ENCODE measurements at regions of chr12 and their contacts with region 1.

Region 1: DNA sequence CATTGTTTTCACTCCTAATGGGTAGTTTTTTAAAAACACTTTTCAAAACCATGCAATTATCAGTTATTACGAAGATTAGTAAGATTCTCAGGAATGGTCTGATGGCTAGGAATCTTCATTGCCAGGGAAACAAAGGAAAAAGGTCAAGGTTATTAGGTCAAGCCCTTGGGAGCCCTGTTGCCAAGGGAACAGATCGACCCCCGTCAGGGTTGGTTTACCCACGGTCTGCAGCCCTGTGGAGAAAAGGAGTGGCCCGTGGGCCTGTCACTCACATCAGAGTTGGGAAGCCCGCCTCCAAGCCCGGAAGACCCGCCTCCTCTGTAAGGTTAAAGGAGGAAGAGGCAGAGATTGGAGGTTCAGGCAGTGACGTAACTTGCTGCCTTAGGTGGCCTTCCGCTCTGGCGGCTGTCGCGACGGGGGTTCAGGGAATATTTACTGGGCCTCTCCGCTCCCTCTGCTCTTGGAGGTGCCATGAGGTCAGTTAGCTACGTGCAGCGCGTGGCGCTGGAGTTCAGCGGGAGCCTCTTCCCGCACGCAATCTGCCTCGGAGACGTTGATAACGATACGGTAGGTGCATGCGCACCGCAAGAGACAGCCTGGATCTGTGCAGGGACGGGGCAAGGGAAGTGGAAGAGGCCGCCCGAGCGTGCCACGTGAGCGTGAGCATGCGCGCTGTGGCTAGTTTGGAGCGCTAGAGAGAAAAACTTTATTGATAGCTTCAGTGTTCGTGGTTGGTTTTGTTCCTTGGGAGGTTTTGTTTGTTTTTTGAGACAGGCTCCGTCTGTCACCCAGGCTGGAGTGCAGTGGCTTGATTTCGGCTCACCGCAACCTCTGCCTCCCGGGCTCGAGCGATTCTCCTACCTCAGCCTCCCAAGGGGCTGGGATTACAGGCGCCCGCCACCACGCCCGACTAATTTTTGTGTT is at the start of gene ITFG2:
- DNase-seq: peak; percentile 99
- H3K4me3 Mint-ChIP-seq: peak within 1 kb of the TSS; percentile 98
- H3K27ac Mint-ChIP-seq: peak within 1 kb of the TSS; percentile 95
- H3K4me1 Mint-ChIP-seq: peaks cover 29% of the 10 kb centered on the region
- H3K27me3 Mint-ChIP-seq: peaks cover 4% of the 10 kb centered on the region

Region 2: DNA sequence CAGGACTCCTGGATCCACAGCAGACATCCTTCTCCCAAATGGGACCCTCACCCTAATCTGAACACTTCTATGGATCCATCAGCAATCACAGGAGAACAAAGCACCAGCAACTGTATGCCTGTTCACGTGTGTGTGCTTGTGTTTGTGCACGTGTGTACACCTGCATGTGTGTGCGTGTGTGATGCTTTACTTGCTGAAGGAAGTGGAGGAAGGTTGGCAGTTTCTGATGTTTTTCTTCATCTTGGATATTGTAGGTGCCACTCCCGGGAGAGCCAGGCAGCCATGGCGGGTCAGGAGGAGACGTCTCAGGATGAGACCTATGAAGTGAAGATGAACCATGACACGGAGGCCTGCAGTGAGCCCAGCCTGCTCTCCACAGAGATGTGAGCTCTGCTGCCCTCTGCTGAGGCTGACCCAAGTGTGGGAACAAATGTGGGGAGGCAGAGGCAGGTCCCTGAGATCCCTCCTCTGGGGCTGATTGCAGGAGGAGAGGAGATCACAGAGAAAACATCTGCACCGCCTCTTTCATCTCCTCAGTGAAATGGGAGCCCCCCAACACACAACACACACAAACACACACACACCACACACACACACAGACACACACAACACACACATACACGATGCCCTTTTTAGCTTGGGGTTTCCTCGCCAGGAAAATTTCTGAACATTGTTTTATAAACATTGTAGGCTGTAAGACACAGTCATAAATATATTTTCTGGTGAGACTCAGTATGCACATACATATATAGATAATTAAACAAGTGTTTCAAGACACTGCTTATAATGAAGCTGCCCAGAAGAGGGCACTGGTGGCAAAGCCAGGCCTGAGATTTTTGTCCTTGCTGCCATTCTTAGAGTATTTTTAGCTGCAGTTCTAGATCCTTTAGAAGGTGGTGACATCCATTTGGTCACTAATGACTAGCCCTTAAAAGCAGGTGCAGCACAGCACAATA is 130.0 kb before region 1 on chr12:
- CTCF ChIA-PET with region 1: interaction called, 11 read pairs
- DNase-seq: peak; percentile 75
- H3K4me3 Mint-ChIP-seq: peak overlapping the region; percentile 69
- H3K27ac Mint-ChIP-seq: peak overlapping the region; percentile 95
- H3K4me1 Mint-ChIP-seq: peaks cover 14% of the 10 kb centered on the region
- H3K27me3 Mint-ChIP-seq: peaks cover 6% of the 10 kb centered on the region

Region 3: DNA sequence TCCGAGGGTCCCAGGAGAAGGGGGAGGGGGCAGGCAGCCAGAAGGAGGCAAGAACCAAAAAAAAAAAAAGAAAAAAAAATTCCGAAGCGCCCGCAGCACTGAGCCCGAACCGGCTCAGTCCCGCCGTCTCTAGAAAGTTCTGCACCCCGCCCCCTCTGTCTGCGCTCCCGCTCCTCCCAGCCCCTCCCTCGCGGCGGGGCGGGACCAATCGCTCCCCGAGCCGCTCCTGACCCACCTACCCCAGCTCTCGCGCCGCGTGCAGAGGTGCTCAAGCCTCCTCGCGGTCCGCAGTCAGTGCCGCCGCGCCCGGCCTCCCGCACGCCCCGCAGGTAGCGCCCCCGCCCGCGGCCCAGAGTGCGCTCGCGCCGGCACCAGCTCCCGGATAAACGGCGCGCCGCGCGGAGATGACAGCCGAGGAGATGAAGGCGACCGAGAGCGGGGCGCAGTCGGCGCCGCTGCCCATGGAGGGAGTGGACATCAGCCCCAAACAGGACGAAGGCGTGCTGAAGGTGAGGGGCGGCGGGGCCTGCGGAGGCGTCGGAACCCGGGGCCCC is 17.7 kb before region 1 on chr12 and contains the start of gene FKBP4:
- CTCF ChIA-PET with region 1: interaction called, 21 read pairs
- DNase-seq: peak; percentile 93
- H3K4me3 Mint-ChIP-seq: peak within 1 kb of the TSS; percentile 92
- H3K27ac Mint-ChIP-seq: peak within 1 kb of the TSS; percentile 84
- H3K4me1 Mint-ChIP-seq: peaks cover 19% of the 10 kb centered on the region
- H3K27me3 Mint-ChIP-seq: peaks cover 29% of the 10 kb centered on the region